ENCODE measurements at regions of chr3 and their contacts with region 1.

Region 1: GRCh38 chr3:169966428-169966950 is at the start of gene SEC62:
- DNase-seq: peak; percentile 95 to 96
- ATAC-seq: peak; percentile 98 to 99 (median 99)
- H3K4me3 ChIP-seq: peak within 1 kb of the TSS; percentile 76 to 93 (median 84)
- H3K27ac ChIP-seq: peak within 1 kb of the TSS; percentile 87 to 98 (median 96)
- H3K4me1 ChIP-seq: peaks cover 0 to 49% (median 46%) of the 10 kb centered on the region in 9 donors
- H3K27me3 ChIP-seq: no peaks in the 10 kb centered on the region
- CTCF ChIP-seq: peak in 8 of 9 donors; percentile 21 to 74 (median 48)
- total RNA-seq, gene SEC62: 73.2 to 108 (median 77.7) TPM

Region 2: DNA sequence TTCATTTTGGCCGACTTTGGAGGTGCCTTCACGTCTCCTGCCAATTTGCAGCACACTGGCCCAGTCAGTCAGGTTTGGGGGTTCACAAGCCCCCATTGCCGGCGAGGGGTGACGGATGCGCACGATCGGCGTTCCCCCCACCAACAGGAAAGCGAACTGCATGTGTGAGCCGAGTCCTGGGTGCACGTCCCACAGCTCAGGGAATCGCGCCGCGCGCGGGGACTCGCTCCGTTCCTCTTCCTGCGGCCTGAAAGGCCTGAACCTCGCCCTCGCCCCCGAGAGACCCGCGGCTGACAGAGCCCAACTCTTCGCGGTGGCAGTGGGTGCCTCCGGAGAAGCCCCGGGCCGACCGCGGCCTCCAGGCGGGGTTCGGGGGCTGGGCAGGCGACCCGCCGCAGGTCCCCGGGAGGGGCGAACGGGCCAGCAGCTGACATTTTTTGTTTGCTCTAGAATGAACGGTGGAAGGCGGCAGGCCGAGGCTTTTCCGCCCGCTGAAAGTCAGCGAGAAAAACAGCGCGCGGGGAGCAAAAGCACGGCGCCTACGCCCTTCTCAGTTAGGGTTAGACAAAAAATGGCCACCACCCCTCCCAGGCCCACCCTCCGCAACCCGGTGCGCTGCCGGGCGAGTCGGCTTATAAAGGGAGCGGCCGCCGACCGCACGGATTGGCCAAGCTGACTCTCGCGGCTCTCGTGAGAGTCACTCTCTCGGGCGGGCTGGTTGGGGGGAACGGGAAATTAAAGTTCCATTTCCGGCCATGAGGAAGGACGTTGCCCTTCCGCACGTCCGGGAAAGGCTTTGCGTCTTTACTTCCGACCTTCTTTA is 201.8 kb before region 1 on chr3 and contains the start of gene TERC:
- intact Hi-C with region 1: loop called in 2 of 10 experiments (anchors 2 to 10 kb)
- DNase-seq: peak; percentile 92 to 95
- ATAC-seq: peak; percentile 96 to 98 (median 97)
- H3K4me3 ChIP-seq: peak within 1 kb of the TSS; percentile 57 to 95 (median 89)
- H3K27ac ChIP-seq: peak within 1 kb of the TSS; percentile 95 to 100 (median 98)
- H3K4me1 ChIP-seq: peaks cover 0 to 24% (median 5%) of the 10 kb centered on the region in 9 donors
- H3K27me3 ChIP-seq: no peaks in the 10 kb centered on the region
- CTCF ChIP-seq: peak in 2 of 9 donors; percentile 2 to 9
- total RNA-seq, gene TERC: 0.81 to 5.1 (median 2.8) TPM in 7 of 10 donors, not detected in the others

Region 3: DNA sequence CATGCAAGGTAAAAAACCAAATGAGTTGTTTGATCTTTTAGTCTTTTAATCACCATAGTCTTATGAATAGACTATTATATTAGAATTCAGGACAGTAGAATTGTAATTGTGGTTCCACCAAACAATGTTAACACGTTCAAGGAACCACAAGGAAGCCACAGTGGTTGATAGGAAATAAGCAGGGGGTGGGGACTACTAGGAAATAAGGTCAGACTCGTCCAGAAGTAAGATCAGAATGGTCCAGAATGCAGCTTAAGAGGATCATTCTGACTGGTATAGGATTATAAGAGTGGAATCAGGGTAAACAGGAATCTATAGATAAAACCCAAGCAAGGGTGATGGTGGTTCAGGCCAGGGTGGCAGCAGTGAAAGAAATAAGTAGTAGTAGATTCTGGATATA is 185.7 kb before region 1 on chr3:
- intact Hi-C with region 1: loop called in 1 of 10 experiments (anchors 10 kb)
- DNase-seq: no peak
- ATAC-seq: no peak
- H3K4me3 ChIP-seq: no peak overlapping the region
- H3K27ac ChIP-seq: no peak overlapping the region
- H3K4me1 ChIP-seq: peaks cover 0 to 27% (median 23%) of the 10 kb centered on the region in 9 donors
- H3K27me3 ChIP-seq: no peaks in the 10 kb centered on the region
- CTCF ChIP-seq: no peak

Region 4: DNA sequence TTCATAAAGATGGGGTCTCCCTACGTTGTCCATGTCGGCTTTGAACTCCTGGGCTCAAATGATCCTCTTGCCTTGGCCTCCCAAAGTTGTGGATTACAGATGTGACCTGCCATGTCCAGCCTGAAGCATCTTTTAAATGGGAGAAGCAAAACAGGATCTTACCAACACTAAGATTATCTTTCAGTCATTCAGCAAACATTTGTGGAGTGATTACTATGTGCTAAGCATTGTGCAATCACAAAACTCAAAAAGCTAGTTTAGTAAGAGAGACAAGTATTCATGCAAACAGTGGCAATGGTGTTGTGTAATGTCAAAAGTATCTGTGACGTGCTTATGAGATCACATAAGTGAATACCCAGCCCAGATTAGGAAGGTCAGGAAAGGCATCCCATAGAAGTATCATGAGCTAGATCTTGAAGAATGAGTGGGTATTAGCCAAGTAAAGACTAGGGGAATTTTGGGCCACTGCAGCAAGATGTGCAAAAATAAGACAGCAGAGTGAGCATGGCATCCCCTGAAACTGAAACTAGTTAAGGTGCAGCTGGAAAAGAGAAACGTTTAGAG is 32.2 kb after region 1 on chr3:
- intact Hi-C with region 1: loop called in 1 of 10 experiments (anchors 5 kb)
- DNase-seq: no peak
- ATAC-seq: peak in 1 of 8 donors; percentile 29
- H3K4me3 ChIP-seq: no peak overlapping the region
- H3K27ac ChIP-seq: no peak overlapping the region
- H3K4me1 ChIP-seq: peaks cover 0 to 36% (median 16%) of the 10 kb centered on the region in 9 donors
- H3K27me3 ChIP-seq: no peaks in the 10 kb centered on the region
- CTCF ChIP-seq: no peak

Region 5: GRCh38 chr3:171809821-171810628 is 1843.5 kb after region 1 on chr3 and contains the start of gene PLD1:
- intact Hi-C with region 1: no loop called
- DNase-seq: peak; percentile 88 to 90
- ATAC-seq: peak; percentile 85 to 95 (median 88)
- H3K4me3 ChIP-seq: peak within 1 kb of the TSS; percentile 53 to 79 (median 68)
- H3K27ac ChIP-seq: peak within 1 kb of the TSS; percentile 80 to 94 (median 90)
- H3K4me1 ChIP-seq: peaks cover 0 to 73% (median 20%) of the 10 kb centered on the region in 9 donors
- H3K27me3 ChIP-seq: no peaks in the 10 kb centered on the region
- CTCF ChIP-seq: peak in 4 of 9 donors; percentile 13 to 45 (median 34)
- total RNA-seq, gene PLD1: 51.4 to 83.3 (median 67.1) TPM

Measured in heart right ventricle (tissue), 16 donors.